Activated naive CD4-positive, alpha-beta T cell treated with anti-CD3 and anti-CD28 coated beads for 36 hours (primary cell): ENCODE measurements at regions of chr7 and their contacts with region 1.

Region 1: DNA sequence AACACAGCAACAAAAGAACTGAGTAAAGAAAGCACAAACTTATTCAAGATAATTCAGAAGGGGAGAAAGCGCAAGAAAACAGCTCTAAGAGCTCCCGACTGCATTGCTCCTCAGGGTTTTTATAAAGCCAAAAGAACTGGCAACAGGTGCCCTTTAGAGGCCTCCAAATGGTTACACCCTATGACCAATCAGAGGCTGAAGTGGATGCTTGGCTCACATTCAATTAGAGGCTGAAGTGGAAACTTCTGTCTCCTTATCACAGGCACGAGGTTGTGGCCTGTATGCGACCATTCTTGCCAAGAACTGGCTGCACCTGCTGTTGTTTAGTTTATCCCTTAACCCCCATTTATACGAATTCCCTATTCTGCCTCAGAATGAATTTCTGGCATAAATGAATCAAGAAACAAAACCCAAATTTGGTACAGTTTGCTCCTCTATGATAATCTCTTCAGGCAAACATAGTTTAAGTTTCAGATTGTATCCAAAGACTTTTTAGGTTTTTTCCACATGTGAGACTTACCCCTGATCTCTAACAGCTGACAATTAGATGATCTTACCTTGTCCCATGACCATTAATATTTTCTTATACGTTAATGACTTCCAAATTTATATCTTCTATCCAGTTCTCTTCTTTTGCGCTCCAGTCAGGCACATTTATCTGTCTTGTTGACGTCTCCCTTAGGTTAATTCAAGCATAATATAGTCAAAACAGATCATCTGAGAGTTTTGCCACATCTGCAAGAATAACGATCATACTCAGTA is 504.8 kb downstream of the NXPH1 start:
- DNase-seq: no peak
- H3K4me3 Mint-ChIP-seq: no peak overlapping the region
- H3K27ac Mint-ChIP-seq: no peak overlapping the region
- H3K4me1 Mint-ChIP-seq: no peaks in the 10 kb centered on the region
- H3K27me3 Mint-ChIP-seq: no peaks in the 10 kb centered on the region

Region 2: DNA sequence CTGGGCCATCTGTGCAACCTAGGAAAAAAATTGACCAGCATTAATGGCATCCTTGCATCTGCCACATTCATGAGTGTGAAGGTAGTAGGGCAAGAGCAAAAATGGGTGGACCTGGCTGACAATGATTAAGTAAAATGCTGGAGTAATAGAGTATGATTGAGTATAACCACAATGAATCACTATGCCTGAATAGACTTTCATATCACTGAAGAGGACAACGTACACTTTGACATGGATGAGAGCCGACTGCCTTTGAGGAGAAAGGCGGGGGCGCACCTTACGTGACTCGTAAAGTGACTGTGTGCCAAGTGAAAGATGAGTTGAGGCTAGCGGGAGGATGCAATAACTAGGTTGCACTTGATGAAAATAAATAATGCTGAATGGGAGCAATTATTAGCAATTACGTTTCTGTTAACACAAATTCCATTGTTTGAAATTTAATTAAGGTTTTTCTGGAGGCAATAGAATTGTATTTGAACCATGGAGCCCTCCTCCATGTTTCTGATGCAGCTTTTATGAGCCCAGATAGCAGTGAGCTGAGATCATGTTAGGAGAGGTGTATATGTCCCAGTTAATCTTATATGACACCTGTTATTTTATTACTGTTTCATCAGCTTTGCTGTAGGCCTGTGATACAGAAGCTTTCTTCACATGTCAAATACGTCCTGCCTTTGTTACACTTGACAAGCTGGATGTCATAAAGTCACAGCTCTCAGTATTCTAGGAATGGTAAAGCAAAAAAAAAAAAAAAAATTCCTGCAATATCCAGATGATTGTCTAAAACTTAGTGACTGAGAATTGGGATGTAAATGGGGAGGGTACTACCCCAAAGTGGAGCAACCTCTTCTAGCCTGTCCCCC is 91.7 kb after region 1 on chr7:
- CTCF ChIA-PET with region 1: no interaction called
- intact Hi-C with region 1: loop called (anchors 10 kb)
- DNase-seq: no peak
- H3K4me3 Mint-ChIP-seq: no peak overlapping the region
- H3K27ac Mint-ChIP-seq: no peak overlapping the region
- H3K4me1 Mint-ChIP-seq: no peaks in the 10 kb centered on the region
- H3K27me3 Mint-ChIP-seq: no peaks in the 10 kb centered on the region